ENCODE measurements at regions of chr18 and their contacts with region 1.

Region 1: GRCh38 chr18:48545757-48546321 is 7.0 kb downstream of the CTIF start:
- DNase-seq: peak; percentile 73 to 90
- ATAC-seq: no peak
- H3K4me3 ChIP-seq: no peak overlapping the region
- H3K27ac ChIP-seq: no peak overlapping the region
- H3K4me1 ChIP-seq: peaks cover 1 to 6% of the 10 kb centered on the region in 2 donors
- H3K27me3 ChIP-seq: no peaks in the 10 kb centered on the region

Region 2: GRCh38 chr18:48613589-48614404 is 68.0 kb after region 1 on chr18:
- intact Hi-C with region 1: loop called in 1 of 2 experiments (anchors 5 kb)
- DNase-seq: peak; percentile 76 to 90
- ATAC-seq: peak; percentile 80
- H3K4me3 ChIP-seq: no peak overlapping the region
- H3K27ac ChIP-seq: peak overlapping the region; percentile 34 to 95
- H3K4me1 ChIP-seq: peaks cover 0 to 4% of the 10 kb centered on the region in 2 donors
- H3K27me3 ChIP-seq: no peaks in the 10 kb centered on the region

Region 3: GRCh38 chr18:48663931-48664847 is 118.3 kb after region 1 on chr18:
- intact Hi-C with region 1: loop called (anchors 5 kb)
- DNase-seq: peak; percentile 80 to 93
- ATAC-seq: peak; percentile 78
- H3K4me3 ChIP-seq: no peak overlapping the region
- H3K27ac ChIP-seq: no peak overlapping the region
- H3K4me1 ChIP-seq: no peaks in the 10 kb centered on the region
- H3K27me3 ChIP-seq: no peaks in the 10 kb centered on the region

Measured in aorta (tissue), 5 donors.